ENCODE measurements at regions of chr10 and their contacts with region 1.

Region 1: DNA sequence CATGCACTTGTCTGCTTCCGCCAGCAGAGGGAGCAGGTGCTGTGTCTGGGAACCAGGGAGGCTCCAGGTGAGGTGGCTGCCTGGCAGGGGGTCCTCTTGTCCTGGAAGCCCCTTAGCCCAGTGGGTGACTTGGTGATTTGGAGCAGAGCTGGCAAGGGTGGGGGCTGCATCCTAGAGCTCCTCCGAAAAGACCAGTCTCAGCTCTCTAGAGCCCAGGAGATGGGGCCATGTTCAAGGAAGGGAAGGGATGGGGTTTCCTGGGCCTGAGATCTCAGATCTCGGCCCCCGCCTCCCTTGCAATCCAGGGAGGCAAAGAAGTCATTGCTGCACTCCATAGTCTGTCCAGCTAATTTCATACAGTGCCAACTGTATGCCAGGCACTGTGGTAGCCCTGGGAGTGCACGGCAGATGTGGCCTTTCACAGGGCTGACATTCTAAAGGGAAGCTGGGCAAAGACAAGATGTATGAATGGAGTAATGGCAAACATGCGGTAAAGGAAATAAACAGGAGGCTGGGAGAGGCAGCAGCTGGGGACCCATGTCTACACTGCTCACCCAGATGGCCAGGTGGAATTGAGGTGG is 20.4 kb upstream of the SFRP5 start:
- DNase-seq: peak; percentile 80
- ATAC-seq: peak; percentile 77
- H3K4me3 Mint-ChIP-seq: no peak overlapping the region
- H3K27ac Mint-ChIP-seq: peak overlapping the region; percentile 58
- H3K4me1 Mint-ChIP-seq: peaks cover 16% of the 10 kb centered on the region
- H3K27me3 Mint-ChIP-seq: no peaks in the 10 kb centered on the region
- CTCF ChIP-seq: peak; percentile 96

Region 2: GRCh38 chr10:97780841-97781617 is 11.2 kb before region 1 on chr10:
- CTCF ChIA-PET with region 1: interaction called, 21 read pairs
- POLR2A ChIA-PET with region 1: interaction called, 3 read pairs
- intact Hi-C with region 1: no loop called
- DNase-seq: no peak
- ATAC-seq: no peak
- H3K4me3 Mint-ChIP-seq: no peak overlapping the region
- H3K27ac Mint-ChIP-seq: peak overlapping the region; percentile 83
- H3K4me1 Mint-ChIP-seq: peaks cover 33% of the 10 kb centered on the region
- H3K27me3 Mint-ChIP-seq: no peaks in the 10 kb centered on the region
- CTCF ChIP-seq: no peak

Region 3: GRCh38 chr10:97812696-97813095 is 20.5 kb after region 1 on chr10:
- CTCF ChIA-PET with region 1: interaction called, 39 read pairs
- POLR2A ChIA-PET with region 1: no interaction called
- intact Hi-C with region 1: no loop called
- DNase-seq: no peak
- ATAC-seq: no peak
- H3K4me3 Mint-ChIP-seq: no peak overlapping the region
- H3K27ac Mint-ChIP-seq: no peak overlapping the region
- H3K4me1 Mint-ChIP-seq: peaks cover 7% of the 10 kb centered on the region
- H3K27me3 Mint-ChIP-seq: no peaks in the 10 kb centered on the region
- CTCF ChIP-seq: no peak

Region 4: DNA sequence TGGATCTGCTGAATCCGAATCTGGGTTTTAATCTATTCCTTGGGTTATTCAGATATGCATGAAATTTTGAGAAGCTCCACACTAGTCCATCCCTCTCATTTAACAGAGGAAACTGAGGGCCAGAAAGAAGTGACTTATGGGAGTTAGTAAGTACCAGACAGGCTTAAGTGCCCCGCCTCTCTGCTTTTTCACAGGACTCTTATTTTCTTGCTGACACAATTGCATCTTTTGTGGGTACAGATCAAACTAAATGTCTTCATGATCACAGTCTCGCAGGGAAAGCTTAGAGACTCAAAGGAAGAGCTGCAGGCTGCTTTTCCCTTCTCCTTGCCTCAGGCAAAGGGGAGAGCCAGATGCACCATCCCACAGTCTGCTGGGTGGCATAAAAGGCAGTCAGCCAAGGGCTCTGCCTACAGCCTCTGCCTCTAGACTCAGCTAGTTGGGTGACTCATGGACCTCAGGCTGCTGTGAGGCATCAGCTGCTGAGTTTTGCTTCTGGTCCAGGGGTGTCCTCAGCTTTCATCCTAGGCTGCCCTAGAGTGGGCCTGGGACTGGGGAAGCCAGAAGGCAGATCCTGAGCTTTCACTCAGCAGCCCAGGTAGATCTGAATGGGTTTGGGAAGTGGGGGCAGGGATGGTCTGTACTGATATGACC is 69.0 kb after region 1 on chr10:
- CTCF ChIA-PET with region 1: interaction called, 232 read pairs
- POLR2A ChIA-PET with region 1: no interaction called
- intact Hi-C with region 1: no loop called
- DNase-seq: peak; percentile 26
- ATAC-seq: peak; percentile 75
- H3K4me3 Mint-ChIP-seq: no peak overlapping the region
- H3K27ac Mint-ChIP-seq: no peak overlapping the region
- H3K4me1 Mint-ChIP-seq: peaks cover 15% of the 10 kb centered on the region
- H3K27me3 Mint-ChIP-seq: no peaks in the 10 kb centered on the region
- CTCF ChIP-seq: no peak

Region 5: DNA sequence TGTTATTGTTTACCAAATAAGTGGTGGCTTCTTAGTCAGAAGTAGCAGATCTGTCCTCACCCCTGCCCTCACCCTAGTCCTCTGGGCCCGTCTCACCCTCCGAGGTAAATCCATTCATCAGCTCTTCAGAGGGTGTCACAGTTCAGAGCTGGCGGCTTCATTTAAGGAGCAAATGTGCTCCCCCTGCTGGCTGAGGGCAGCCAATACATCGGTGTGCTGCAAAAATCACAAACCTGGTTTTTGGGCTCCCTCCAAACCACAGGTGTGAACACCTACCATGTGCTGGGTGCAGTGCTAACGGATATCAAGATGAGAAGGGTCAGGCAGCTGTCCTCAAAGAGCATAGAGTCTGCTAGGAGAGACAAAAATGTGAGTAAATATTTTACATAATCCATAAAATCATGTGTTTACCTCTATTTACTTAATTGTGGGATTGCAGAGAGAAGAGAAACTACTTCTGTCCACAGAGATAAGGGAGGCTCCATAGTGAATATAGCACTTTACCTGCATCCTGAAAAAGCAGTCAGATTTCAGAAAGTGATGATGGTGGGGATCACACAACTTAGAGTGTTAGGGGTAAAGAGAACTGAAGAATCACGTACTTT is 253.7 kb after region 1 on chr10:
- CTCF ChIA-PET with region 1: interaction called, 6 read pairs
- POLR2A ChIA-PET with region 1: no interaction called
- intact Hi-C with region 1: loop called (anchors 10 kb)
- DNase-seq: peak; percentile 74
- ATAC-seq: peak; percentile 97
- H3K4me3 Mint-ChIP-seq: no peak overlapping the region
- H3K27ac Mint-ChIP-seq: no peak overlapping the region
- H3K4me1 Mint-ChIP-seq: peaks cover 4% of the 10 kb centered on the region
- H3K27me3 Mint-ChIP-seq: peaks cover 28% of the 10 kb centered on the region
- CTCF ChIP-seq: peak; percentile 83

Measured in activated CD8-positive, alpha-beta T cell treated with anti-CD3 and anti-CD28 coated beads for 36 hours (primary cell).